ENCODE measurements at regions of chr6 and their contacts with region 1.

Region 1: GRCh38 chr6:85642774-85643536 is at the start of gene SYNCRIP:
- DNase-seq: peak; percentile 97 to 99 (median 99)
- H3K4me3 ChIP-seq: peak within 1 kb of the TSS; percentile 82 to 98
- H3K4me3 Mint-ChIP-seq: peak within 1 kb of the TSS; percentile 92 to 98 (median 94)
- H3K27ac ChIP-seq: peak within 1 kb of the TSS; percentile 96
- H3K27ac Mint-ChIP-seq: peak within 1 kb of the TSS; percentile 98 to 100 (median 99)
- H3K4me1 ChIP-seq: peaks cover 43% of the 10 kb centered on the region
- H3K4me1 Mint-ChIP-seq: peaks cover 38 to 65% (median 47%) of the 10 kb centered on the region in 4 donors
- H3K27me3 ChIP-seq: no peaks in the 10 kb centered on the region
- H3K27me3 Mint-ChIP-seq: peaks cover 0 to 2% of the 10 kb centered on the region in 2 donors
- total RNA-seq, gene SYNCRIP: 81.4 to 84.3 TPM

Region 2: GRCh38 chr6:85628353-85628752 is 14.6 kb before region 1 on chr6:
- CTCF ChIA-PET with region 1: interaction called, 6 read pairs
- POLR2A ChIA-PET with region 1: interaction called, 24 read pairs
- intact Hi-C with region 1: no loop called
- DNase-seq: no peak
- H3K4me3 ChIP-seq: no peak overlapping the region
- H3K4me3 Mint-ChIP-seq: no peak overlapping the region
- H3K27ac ChIP-seq: no peak overlapping the region
- H3K27ac Mint-ChIP-seq: peak overlapping the region in 4 of 7 donors; percentile 7 to 58 (median 44)
- H3K4me1 ChIP-seq: peaks cover 45% of the 10 kb centered on the region
- H3K4me1 Mint-ChIP-seq: peaks cover 42 to 77% (median 62%) of the 10 kb centered on the region in 4 donors
- H3K27me3 ChIP-seq: no peaks in the 10 kb centered on the region
- H3K27me3 Mint-ChIP-seq: no peaks in the 10 kb centered on the region

Region 3: DNA sequence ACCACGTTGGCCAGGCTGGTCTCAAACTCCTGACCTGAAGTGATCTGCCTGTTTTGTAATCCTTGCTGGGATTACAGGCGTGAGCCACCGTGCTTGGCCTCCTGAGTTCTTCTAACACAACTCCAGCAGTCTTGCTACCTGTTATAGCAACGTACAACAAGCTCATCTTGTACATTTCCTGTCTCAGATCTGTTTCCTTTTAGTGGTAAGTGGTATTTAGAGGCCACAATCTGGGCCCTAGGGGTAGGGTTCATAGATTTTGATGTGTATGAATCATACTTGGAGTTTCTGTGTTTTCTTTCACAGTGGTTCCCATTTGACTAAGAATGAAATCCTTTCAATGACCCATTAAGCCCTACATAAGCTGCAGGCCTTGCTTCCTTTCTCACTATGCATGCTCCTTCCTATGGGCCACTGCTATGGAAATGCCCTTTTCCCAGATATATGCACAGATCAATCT is 26.8 kb after region 1 on chr6:
- CTCF ChIA-PET with region 1: interaction called, 129 read pairs
- POLR2A ChIA-PET with region 1: interaction called, 1,033 read pairs
- intact Hi-C with region 1: no loop called
- DNase-seq: peak; percentile 59 to 76 (median 71)
- H3K4me3 ChIP-seq: no peak overlapping the region
- H3K4me3 Mint-ChIP-seq: peak overlapping the region; percentile 66 to 86 (median 78)
- H3K27ac ChIP-seq: peak overlapping the region; percentile 58
- H3K27ac Mint-ChIP-seq: peak overlapping the region; percentile 95 to 98 (median 97)
- H3K4me1 ChIP-seq: peaks cover 55% of the 10 kb centered on the region
- H3K4me1 Mint-ChIP-seq: peaks cover 40 to 59% (median 52%) of the 10 kb centered on the region in 4 donors
- H3K27me3 ChIP-seq: no peaks in the 10 kb centered on the region
- H3K27me3 Mint-ChIP-seq: no peaks in the 10 kb centered on the region

Measured in CD4-positive, alpha-beta memory T cell (primary cell).